ENCODE measurements at regions of chr20 and their contacts with region 1.

Region 1: GRCh38 chr20:48904365-48905296 is 16.9 kb upstream of the ARFGEF2 start:
- DNase-seq: no peak
- H3K4me3 ChIP-seq: no peak overlapping the region
- H3K27ac ChIP-seq: no peak overlapping the region
- H3K27me3 ChIP-seq: peaks cover 5% of the 10 kb centered on the region
- CTCF ChIP-seq: peak; percentile 85

Region 2: GRCh38 chr20:48635433-48636310 is 269.0 kb before region 1 on chr20:
- CTCF ChIA-PET with region 1: interaction called, 31 read pairs
- POLR2A ChIA-PET with region 1: no interaction called
- DNase-seq: no peak
- H3K4me3 ChIP-seq: no peak overlapping the region
- H3K27ac ChIP-seq: no peak overlapping the region
- H3K27me3 ChIP-seq: peaks cover 3% of the 10 kb centered on the region
- CTCF ChIP-seq: peak; percentile 87

Region 3: GRCh38 chr20:48648550-48648951 is 256.1 kb before region 1 on chr20:
- CTCF ChIA-PET with region 1: interaction called, 12 read pairs
- POLR2A ChIA-PET with region 1: no interaction called
- DNase-seq: no peak
- H3K4me3 ChIP-seq: no peak overlapping the region
- H3K27ac ChIP-seq: no peak overlapping the region
- H3K27me3 ChIP-seq: no peaks in the 10 kb centered on the region
- CTCF ChIP-seq: no peak

Region 4: GRCh38 chr20:48682529-48683251 is 221.9 kb before region 1 on chr20:
- CTCF ChIA-PET with region 1: interaction called, 13 read pairs
- POLR2A ChIA-PET with region 1: no interaction called
- DNase-seq: peak; percentile 93
- H3K4me3 ChIP-seq: peak overlapping the region; percentile 35
- H3K27ac ChIP-seq: peak overlapping the region; percentile 77
- H3K27me3 ChIP-seq: no peaks in the 10 kb centered on the region
- CTCF ChIP-seq: no peak

Region 5: GRCh38 chr20:49054056-49054643 is 149.5 kb after region 1 on chr20:
- CTCF ChIA-PET with region 1: interaction called, 11 read pairs
- POLR2A ChIA-PET with region 1: no interaction called
- DNase-seq: no peak
- H3K4me3 ChIP-seq: no peak overlapping the region
- H3K27ac ChIP-seq: no peak overlapping the region
- H3K27me3 ChIP-seq: no peaks in the 10 kb centered on the region
- CTCF ChIP-seq: no peak